ENCODE measurements at regions of chr11 and their contacts with region 1.

Region 1: DNA sequence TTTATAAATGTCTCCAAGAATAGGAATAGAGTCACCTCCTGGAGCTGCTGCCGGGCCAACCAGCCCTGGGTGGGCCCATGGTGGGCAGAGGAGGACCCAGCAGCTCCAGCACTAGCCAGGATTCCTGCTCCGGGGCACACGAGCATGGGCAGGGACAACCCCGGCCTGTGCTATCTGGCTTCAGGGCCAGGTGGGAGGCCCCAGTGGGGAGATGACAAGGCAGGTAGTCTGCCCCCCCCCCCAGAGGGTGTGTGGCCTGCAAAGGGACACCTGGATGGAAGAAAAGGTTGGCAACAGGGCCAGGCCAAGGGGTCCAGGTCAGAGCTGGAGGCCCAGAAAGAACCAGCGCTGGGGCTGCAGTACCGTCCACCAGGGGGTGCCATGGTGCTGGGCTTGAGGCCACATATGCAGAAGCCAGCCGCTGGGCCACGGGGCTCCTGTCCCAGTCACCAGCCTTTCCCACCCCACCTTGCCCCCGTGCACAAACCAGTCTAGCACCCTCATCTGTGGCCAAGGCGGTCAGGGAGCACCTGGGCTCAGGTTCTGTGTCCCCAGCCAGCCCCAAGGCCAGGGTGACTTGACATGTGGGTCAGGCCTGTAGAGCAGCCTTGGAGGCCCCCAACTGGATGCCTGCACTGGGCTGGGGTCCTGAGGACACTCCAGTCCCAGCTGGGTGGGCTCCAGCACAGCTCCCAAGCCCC is 3.5 kb downstream of the TSPAN32 start:
- DNase-seq: peak; percentile 83
- CTCF ChIP-seq: peak; percentile 90

Region 2: DNA sequence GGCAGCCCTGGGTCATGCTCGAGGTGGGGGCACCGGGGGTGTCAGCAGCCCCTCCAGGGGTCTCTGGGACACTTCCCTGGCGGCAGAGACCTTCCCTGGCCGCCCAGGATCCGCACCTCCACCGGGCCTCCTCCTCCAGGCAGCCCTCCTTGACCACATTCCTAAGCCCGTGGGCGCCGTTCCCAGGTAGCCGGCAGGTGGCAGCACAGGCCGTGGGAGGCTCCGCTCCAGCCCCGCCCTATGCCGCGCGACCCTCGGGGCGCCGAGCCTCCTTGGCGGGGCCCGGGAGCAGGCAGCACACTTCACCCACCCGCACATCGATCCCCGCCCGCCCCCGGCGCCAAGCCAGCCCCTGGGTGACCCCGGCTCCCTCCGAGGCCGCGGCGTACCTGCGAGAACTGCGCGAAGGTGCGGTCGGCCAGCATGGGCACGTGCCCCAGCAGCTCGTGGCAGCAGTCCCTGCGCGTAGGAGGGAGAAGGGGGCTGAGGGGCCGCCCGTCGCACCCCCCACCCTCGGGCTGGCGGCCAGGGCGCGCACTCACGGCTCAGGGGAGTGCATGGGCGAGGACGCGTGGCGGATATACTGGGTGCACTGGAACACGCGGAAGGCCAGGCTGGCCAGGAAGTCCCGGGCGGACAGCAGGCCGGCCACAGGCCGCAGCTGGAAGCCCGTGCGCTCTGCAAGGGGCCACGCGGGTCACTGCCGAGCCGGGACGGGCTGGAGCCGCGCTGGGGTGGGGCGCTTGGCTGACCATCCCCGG is 139.0 kb before region 1 on chr11:
- CTCF ChIA-PET with region 1: no interaction called
- POLR2A ChIA-PET with region 1: no interaction called
- DNase-seq: peak; percentile 61
- CTCF ChIP-seq: peak; percentile 41

Region 3: DNA sequence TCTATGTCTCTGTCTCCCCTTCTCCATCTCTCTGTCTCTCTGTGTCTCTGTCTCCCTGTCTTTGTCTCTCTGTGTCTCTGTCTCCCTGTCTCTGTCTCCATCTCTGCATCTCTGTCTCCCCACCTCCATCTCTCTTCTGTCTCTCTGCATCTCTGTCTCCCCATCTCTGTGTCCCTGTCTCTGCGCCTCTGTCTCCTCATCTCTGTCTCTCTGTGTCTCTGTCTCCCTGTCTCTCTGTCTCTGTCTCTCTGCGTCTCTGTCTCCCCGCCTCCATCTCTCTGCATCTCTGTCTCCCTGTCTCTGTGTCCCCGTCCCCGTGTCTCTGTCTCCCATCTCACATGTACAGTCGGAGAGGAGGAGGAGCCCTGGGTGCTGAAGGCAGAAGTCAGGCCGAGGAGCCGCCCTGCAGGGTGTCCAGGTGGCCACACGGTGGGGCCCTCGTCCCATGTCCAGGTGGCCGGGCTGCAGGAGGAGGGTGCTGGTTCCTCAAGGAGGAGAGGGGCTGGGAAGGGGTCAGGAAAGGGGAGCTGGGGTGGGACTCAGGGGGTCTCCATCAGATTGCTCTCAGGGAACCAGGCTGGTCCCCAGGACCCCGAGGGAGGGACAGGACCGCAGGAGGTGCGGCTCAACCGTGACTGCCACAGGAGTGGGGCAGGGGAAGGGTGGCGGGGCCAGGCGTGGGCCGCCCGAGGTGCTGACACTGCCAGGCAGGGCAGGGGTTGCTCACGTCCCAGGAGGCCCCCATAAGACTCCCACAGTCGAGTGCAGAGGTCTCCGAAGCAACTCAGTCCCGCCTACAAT is 108.1 kb before region 1 on chr11:
- CTCF ChIA-PET with region 1: interaction called, 13 read pairs
- POLR2A ChIA-PET with region 1: no interaction called
- DNase-seq: peak; percentile 82
- CTCF ChIP-seq: peak; percentile 96

Region 4: DNA sequence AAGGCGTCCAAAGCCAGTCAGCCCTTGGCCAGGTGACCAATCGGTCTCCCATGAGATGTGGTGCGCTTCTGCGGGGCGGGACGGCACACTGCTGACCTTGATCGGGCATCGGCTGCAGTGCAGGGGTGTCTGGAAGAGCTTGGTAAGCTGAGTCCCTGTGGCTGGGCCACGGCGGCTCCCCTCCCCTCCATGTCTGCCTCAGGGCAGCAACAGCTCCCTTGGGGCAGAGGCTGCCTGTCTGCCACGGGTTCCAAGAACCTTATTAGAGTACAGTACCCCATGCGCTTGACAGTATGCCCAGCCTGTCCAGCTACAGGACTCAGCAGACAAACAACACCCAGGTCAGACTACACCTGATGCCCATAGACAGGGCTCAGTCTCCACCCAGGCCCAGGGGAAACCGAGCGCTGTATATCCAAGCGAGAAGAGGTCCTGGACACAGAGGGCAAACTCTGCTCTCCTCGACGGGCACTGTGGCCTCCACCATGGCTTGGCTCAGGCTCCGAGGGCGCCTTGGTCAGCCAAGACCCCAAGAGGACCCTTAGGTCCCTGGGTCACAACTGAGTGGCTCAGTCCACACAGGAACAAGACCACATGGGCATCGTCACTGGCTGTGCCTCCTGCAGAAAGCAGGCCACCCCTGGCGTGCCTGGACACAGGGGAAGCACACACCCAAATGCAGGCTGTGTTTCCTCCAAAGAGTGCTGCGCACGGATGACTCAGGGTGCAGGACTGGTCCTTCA is 15.4 kb after region 1 on chr11:
- CTCF ChIA-PET with region 1: interaction called, 20 read pairs
- POLR2A ChIA-PET with region 1: no interaction called
- DNase-seq: no peak
- CTCF ChIP-seq: no peak

Region 5: GRCh38 chr11:2409611-2410468 is 104.5 kb after region 1 on chr11:
- CTCF ChIA-PET with region 1: interaction called, 16 read pairs
- POLR2A ChIA-PET with region 1: interaction called, 3 read pairs
- DNase-seq: no peak
- CTCF ChIP-seq: no peak

Region 6: GRCh38 chr11:2420502-2421225 is 115.4 kb after region 1 on chr11:
- CTCF ChIA-PET with region 1: interaction called, 485 read pairs
- POLR2A ChIA-PET with region 1: interaction called, 4 read pairs
- DNase-seq: peak; percentile 92
- CTCF ChIP-seq: peak; percentile 96

Region 7: GRCh38 chr11:2428322-2428795 is 123.1 kb after region 1 on chr11:
- CTCF ChIA-PET with region 1: interaction called, 485 read pairs
- POLR2A ChIA-PET with region 1: no interaction called
- DNase-seq: peak; percentile 77
- CTCF ChIP-seq: peak; percentile 92

Measured in GM10248 (cell line).